HEK293T (cell line): ENCODE measurements at regions of chr22 and their contacts with region 1.

Region 1: DNA sequence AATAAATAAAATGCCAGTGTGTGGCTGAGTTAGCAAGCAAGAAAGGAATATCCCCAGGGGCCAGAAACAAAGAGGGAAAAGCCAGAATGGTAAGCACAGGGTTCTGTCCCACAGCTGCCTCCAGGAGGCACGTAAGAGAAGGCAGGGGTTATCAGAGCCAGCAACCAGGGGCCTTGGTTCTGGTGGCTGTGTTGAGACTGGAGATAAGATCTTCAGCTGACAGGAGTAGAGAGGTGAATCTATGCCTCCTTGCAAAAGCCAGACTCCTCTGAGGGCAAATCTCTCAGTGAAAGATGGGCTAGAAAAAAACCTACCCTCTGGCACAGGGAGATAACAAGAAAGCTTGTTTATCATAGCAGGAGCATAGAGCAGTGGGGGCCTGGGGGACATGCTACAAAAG is 29.8 kb upstream of the NFAM1 start:
- DNase-seq: no peak

Region 2: DNA sequence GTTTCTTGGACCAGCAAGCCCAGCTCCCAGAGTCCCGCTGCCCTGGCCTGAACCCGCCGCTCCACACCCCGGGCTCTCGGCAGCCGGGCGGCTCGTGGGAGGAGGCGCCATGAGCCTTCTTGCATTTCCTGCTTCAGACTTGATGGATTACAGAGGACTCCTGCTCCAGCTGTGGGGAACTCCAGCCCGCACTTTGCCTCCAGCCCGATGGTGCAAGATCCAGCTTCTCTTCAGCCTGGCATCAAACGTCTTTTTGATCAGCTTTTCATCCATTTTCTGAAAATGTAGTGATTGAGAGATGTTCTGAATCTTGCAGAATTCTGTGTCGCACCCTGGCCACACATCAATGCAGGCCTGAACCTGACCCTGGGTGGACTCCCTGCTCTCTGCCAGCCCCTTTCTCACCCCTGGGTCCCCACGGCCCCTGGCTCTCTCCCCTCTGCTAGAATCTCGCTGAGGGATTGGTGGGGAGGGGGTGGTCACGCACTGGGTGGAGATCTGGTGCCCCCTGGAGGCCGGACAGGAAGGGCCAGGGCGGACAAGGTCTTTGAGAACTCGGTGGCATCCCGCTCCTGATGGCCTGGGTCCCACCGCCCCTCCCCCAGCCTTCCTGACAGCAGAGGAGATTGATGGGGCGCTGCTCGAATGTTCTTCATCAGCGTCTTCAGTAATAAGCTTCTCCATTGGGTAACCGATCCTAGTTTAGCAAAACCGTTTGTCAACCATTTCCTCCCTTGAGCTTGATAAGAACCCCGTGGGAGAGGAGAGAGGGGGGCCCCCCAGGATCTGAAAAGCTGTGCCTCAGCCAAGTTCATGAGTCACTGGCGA is 17.7 kb before region 1 on chr22:
- CTCF ChIA-PET with region 1: interaction called, 12 read pairs
- POLR2A ChIA-PET with region 1: interaction called, 5 read pairs
- DNase-seq: peak; percentile 85

Region 3: DNA sequence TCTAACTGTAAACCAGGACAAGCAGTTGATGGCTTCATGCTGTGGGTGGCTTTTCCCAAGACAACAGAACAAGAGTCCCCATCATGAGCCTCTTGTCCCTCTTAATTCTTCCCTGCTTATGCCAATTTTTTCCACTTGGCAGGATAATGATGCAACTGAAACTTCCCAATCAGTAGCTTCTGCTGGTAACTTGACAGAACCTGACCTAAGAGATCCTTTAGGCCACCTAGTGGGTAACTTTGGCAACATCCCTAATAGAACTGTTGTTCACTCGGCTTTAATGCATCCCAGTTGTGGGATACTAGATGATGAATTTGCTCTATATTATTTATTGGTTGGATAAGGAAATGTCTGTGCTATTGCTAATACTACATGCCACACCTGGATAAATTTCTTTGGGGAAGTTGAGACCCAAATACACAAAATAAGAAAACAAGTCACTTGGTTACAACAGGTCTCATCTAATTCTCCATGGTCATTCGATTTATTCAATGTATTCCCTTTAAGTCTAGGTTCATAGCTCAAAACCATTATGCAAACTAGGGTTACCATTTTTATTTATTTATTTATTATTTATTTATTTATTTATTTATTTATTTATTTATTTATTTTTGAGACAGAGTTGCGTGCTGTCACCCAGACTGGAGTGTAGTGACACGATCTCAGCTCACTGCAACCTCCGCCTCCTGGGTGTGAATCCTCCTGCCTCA is 11.6 kb after region 1 on chr22:
- CTCF ChIA-PET with region 1: interaction called, 12 read pairs
- POLR2A ChIA-PET with region 1: interaction called, 3 read pairs
- DNase-seq: peak; percentile 61